AG04450 (cell line): ENCODE measurements at regions of chr2 and their contacts with region 1.

Region 1: GRCh38 chr2:119476301-119477021 is 44.8 kb downstream of the TMEM37 start:
- DNase-seq: peak; percentile 10
- H3K4me3 ChIP-seq: no peak overlapping the region
- H3K27ac ChIP-seq: no peak overlapping the region
- H3K27me3 ChIP-seq: no peaks in the 10 kb centered on the region
- CTCF ChIP-seq: peak; percentile 91

Region 2: GRCh38 chr2:119011162-119011909 is 465.1 kb before region 1 on chr2:
- CTCF ChIA-PET with region 1: interaction called, 14 read pairs
- POLR2A ChIA-PET with region 1: no interaction called
- DNase-seq: no peak
- H3K4me3 ChIP-seq: no peak overlapping the region
- H3K27ac ChIP-seq: no peak overlapping the region
- H3K27me3 ChIP-seq: peaks cover 4% of the 10 kb centered on the region
- CTCF ChIP-seq: peak; percentile 53

Region 3: DNA sequence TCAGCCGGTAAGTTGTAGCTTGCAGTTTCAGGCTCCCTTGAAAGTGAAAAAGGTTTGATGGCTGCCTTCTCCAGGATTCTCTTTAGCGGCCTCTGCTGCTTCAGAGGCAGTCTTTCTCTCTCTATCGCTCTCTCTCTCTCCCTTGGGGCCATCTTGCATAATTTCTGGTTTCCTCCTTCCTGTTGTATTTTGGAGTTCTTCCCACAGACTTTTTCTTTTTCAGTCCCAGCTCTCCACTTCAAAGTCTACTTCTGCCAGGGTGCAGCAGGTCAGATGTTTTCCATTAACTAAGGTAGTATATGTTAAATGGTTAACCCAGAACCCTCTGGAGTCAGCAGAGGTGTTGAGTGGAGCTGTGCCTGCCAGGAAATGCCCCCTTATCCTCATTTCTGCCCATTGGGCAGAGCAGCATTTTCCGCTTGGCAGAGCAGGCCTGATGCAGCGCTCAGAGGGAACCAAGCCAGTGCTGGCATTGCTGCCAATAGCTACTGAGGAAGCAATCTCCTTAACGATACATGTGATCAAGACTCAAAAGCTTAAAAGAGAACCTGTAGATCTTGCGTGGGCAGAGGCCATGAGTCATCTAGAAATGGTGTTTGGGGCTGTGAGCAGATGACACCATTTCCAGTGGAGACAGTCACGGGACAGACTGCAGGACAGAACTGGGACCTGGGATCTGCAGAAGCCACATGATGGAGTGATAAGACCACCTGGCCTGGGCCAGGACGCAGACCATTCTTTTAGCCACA is 88.9 kb before region 1 on chr2:
- CTCF ChIA-PET with region 1: no interaction called
- POLR2A ChIA-PET with region 1: no interaction called
- DNase-seq: no peak
- H3K4me3 ChIP-seq: no peak overlapping the region
- H3K27ac ChIP-seq: no peak overlapping the region
- H3K27me3 ChIP-seq: peaks cover 15% of the 10 kb centered on the region
- CTCF ChIP-seq: peak; percentile 38; the same call in 1 of the 2 replicates

Region 4: DNA sequence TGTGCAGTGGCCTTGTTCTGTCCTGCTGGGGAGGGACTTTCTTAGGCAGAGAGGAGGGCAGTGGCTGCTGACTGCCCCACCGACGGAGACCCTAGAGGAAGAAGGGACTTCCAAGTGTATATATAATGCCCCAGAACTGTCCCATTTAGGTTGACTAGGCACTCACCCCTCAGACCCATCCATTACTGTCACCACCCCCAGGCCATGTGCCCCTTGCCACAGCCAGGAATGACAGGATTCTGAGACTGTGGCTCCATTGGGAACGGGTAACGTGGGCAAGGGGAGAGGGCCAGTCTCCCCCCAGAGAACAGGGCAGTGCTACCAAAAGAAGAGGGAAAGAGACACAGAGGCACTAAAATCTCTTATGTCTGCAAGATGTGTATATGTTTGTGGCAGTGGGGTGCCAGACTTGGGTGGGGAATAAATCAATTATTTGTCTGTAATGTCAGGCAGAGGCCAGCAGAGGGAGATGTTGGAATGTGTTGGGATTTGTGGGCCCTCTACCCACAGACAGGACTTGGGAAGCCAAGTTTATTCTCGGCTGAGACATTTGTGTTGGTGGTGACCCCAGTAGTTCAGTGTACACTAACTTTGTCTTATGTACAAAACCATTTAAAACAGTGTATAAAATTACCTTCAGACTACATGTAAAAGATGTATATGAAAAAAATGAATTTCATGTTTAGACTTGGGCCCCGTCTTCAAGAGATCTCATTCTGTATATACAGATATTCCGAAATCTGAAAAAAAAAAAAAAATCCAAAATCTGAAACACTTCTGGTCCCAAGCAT is 68.8 kb before region 1 on chr2:
- CTCF ChIA-PET with region 1: interaction called, 41 read pairs
- POLR2A ChIA-PET with region 1: no interaction called
- DNase-seq: peak; percentile 43
- H3K4me3 ChIP-seq: no peak overlapping the region
- H3K27ac ChIP-seq: no peak overlapping the region
- H3K27me3 ChIP-seq: peaks cover 2% of the 10 kb centered on the region
- CTCF ChIP-seq: peak; percentile 84

Region 5: GRCh38 chr2:119414894-119415293 is 61.6 kb before region 1 on chr2:
- CTCF ChIA-PET with region 1: interaction called, 41 read pairs
- POLR2A ChIA-PET with region 1: no interaction called
- DNase-seq: no peak
- H3K4me3 ChIP-seq: no peak overlapping the region
- H3K27ac ChIP-seq: no peak overlapping the region
- H3K27me3 ChIP-seq: peaks cover 7% of the 10 kb centered on the region
- CTCF ChIP-seq: no peak

Region 6: GRCh38 chr2:119442226-119442619 is 34.2 kb before region 1 on chr2:
- CTCF ChIA-PET with region 1: no interaction called
- POLR2A ChIA-PET with region 1: no interaction called
- DNase-seq: no peak
- H3K4me3 ChIP-seq: no peak overlapping the region
- H3K27ac ChIP-seq: no peak overlapping the region
- H3K27me3 ChIP-seq: peaks cover 16% of the 10 kb centered on the region
- CTCF ChIP-seq: no peak

Region 7: GRCh38 chr2:119487434-119488244 is 11.2 kb after region 1 on chr2:
- CTCF ChIA-PET with region 1: interaction called, 32 read pairs
- POLR2A ChIA-PET with region 1: no interaction called
- DNase-seq: no peak
- H3K4me3 ChIP-seq: no peak overlapping the region
- H3K27ac ChIP-seq: no peak overlapping the region
- H3K27me3 ChIP-seq: peaks cover 17% of the 10 kb centered on the region
- CTCF ChIP-seq: no peak

Region 8: GRCh38 chr2:119671016-119671415 is 194.6 kb after region 1 on chr2:
- CTCF ChIA-PET with region 1: no interaction called
- POLR2A ChIA-PET with region 1: no interaction called
- DNase-seq: no peak
- H3K4me3 ChIP-seq: no peak overlapping the region
- H3K27ac ChIP-seq: no peak overlapping the region
- H3K27me3 ChIP-seq: peaks cover 15% of the 10 kb centered on the region
- CTCF ChIP-seq: no peak

Region 9: GRCh38 chr2:119766944-119767343 is 290.5 kb after region 1 on chr2:
- CTCF ChIA-PET with region 1: no interaction called
- POLR2A ChIA-PET with region 1: no interaction called
- DNase-seq: no peak
- H3K4me3 ChIP-seq: no peak overlapping the region
- H3K27ac ChIP-seq: no peak overlapping the region
- H3K27me3 ChIP-seq: no peaks in the 10 kb centered on the region
- CTCF ChIP-seq: no peak